ENCODE measurements at regions of chr5 and their contacts with region 1.

Region 1: DNA sequence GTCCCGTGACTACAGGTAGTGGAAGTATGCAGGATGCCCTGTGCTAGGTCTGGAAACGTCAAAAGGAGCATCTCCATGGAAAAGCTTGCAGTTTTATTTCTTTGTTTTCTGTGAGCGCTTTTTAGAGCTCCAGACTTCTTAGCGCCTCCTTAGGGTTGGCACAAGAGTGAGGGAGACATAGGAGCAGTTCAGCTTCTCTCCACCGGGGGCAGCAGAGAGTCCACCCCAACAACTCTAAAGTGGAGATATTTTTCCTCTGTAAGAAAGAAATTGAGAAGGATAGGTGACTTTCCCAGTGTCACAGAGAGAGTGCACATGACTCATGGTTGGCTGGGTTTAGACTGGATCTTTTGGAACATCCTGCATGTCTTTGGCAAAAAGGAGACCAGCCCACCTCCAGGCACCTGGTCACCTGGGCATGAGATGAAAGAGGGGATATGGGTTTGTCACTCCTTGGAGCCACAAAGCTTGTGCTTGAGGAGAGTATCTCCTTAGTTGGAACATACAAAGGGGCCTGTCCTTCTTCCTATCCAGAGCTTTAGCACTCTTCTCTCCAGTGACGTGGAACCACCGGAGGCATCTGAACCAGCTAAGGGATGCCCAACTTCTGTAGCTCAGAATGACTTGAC is 637.7 kb downstream of the SEMA5A start:
- DNase-seq: no peak
- ATAC-seq: peak; percentile 66
- H3K4me3 ChIP-seq: no peak overlapping the region
- H3K27ac ChIP-seq: no peak overlapping the region
- H3K4me1 ChIP-seq: no peaks in the 10 kb centered on the region
- H3K27me3 ChIP-seq: no peaks in the 10 kb centered on the region
- CTCF ChIP-seq: peak; percentile 45 to 74 (median 65)
- EP300 ChIP-seq: no peak
- POLR2A ChIP-seq: no peak
- RAD21 ChIP-seq: peak; percentile 33

Region 2: DNA sequence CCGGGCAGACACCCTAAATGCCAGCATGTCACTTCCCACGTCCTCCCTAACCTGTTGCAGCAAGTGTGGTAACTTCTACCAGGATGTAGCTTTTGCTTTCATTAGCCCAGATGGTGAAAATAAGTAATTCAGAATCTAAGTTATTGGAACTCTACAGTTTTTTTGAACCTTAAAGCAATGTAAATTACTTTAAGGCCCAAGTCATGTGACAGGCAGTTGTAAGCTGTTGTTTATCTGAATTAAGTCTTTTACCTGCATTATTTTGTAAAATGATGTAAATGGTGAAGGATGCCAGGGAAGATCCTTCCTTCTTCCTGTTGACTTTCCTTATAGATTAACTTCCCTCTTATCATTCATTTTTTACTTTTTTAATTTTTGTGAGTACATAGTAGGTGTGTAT is 32.4 kb before region 1 on chr5:
- CTCF ChIA-PET with region 1: no interaction called
- POLR2A ChIA-PET with region 1: no interaction called
- RAD21 ChIA-PET with region 1: no interaction called
- SMC1A ChIA-PET with region 1: no interaction called
- in situ Hi-C with region 1: no loop called
- intact Hi-C with region 1: no loop called
- DNase-seq: no peak
- ATAC-seq: no peak
- H3K4me3 ChIP-seq: no peak overlapping the region
- H3K27ac ChIP-seq: no peak overlapping the region
- H3K4me1 ChIP-seq: no peaks in the 10 kb centered on the region
- H3K27me3 ChIP-seq: no peaks in the 10 kb centered on the region
- CTCF ChIP-seq: no peak
- EP300 ChIP-seq: no peak
- POLR2A ChIP-seq: no peak
- RAD21 ChIP-seq: no peak

Region 3: GRCh38 chr5:8923526-8923925 is 15.4 kb after region 1 on chr5:
- CTCF ChIA-PET with region 1: interaction called, 11 read pairs
- POLR2A ChIA-PET with region 1: no interaction called
- RAD21 ChIA-PET with region 1: no interaction called
- SMC1A ChIA-PET with region 1: no interaction called
- in situ Hi-C with region 1: no loop called
- intact Hi-C with region 1: no loop called
- DNase-seq: no peak
- ATAC-seq: no peak
- H3K4me3 ChIP-seq: no peak overlapping the region
- H3K27ac ChIP-seq: no peak overlapping the region
- H3K4me1 ChIP-seq: no peaks in the 10 kb centered on the region
- H3K27me3 ChIP-seq: no peaks in the 10 kb centered on the region
- CTCF ChIP-seq: no peak
- EP300 ChIP-seq: no peak
- POLR2A ChIP-seq: no peak
- RAD21 ChIP-seq: no peak

Measured in GM12878 (cell line).